Activated T-helper 1 cell treated with anti-CD3 and anti-CD28 coated beads, Interleukin-12 subunit alpha, Interleukin-12 subunit beta, Interleukin-2, Interleukin-4 antibody, amounts not matched to agents 30 ng/mL and 10 ng/mL and 1 ng/mL, durations not matched to agents 14 hours and 24 hours and 36 hours (primary cell): ENCODE measurements at regions of chr22 and their contacts with region 1.

Region 1: DNA sequence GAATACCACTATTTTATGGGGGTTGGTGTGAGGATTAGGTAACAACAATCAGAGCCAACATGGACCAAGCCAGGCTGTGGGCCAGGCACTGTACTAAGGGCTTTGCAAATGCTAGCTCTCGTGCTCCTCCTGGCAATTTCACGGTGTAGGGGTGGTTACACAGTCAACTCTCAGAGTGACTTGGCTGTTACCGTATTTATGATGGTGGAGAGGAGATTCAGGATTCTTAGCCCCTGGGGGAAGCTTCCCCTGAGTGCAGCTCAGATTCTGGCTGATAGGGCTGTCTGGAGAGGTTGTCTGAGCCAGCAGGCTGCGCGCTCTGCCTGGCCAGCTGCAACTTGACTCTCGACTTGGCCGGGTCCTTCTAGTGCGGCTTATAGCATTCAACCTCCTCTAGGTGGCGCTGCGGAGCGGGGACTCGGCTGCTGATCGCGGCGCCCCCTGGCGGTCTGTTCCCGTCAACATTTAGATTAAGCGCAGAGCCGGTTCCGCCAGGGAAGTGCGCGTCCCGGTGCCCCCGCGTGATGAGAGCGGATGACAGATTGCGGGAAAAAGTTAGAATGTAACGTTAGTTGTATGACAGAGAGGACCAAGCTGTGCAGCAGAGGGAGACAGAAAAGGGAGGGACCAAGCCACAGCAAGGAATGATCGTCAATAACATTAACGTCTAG is 4.5 kb upstream of the NCF4 start:
- DNase-seq: peak; percentile 90
- H3K4me3 Mint-ChIP-seq: peak overlapping the region; percentile 58
- H3K27ac Mint-ChIP-seq: peak overlapping the region; percentile 73
- H3K4me1 Mint-ChIP-seq: peaks cover 56% of the 10 kb centered on the region
- H3K27me3 Mint-ChIP-seq: peaks cover under 1% of the 10 kb centered on the region

Region 2: DNA sequence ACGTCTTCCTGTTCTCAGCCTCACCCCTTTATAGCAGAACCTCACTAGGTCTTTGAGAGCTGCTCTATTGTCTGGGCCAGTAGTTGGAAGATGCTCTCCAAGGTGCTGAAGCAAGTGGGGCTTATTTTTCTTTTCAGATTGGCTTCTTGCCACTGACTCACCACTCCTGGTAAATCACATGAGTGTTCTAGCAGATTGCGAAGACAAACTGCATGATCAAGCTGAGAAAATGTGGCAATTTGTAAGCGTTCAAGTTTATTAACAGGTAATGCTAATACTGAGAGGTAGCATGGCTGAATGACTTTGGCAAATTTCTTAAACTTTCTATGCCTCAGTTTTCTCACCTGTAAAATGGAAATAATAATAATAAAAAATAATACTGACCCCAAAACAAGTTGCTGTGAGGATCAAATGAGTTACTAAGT is 211.9 kb before region 1 on chr22:
- intact Hi-C with region 1: no loop called
- DNase-seq: no peak
- H3K4me3 Mint-ChIP-seq: no peak overlapping the region
- H3K27ac Mint-ChIP-seq: no peak overlapping the region
- H3K4me1 Mint-ChIP-seq: no peaks in the 10 kb centered on the region
- H3K27me3 Mint-ChIP-seq: peaks cover 12% of the 10 kb centered on the region

Region 3: GRCh38 chr22:36757668-36758211 is 98.5 kb before region 1 on chr22:
- intact Hi-C with region 1: loop called (anchors 1 kb)
- DNase-seq: peak; percentile 63
- H3K4me3 Mint-ChIP-seq: no peak overlapping the region
- H3K27ac Mint-ChIP-seq: no peak overlapping the region
- H3K4me1 Mint-ChIP-seq: no peaks in the 10 kb centered on the region
- H3K27me3 Mint-ChIP-seq: peaks cover 8% of the 10 kb centered on the region

Region 4: DNA sequence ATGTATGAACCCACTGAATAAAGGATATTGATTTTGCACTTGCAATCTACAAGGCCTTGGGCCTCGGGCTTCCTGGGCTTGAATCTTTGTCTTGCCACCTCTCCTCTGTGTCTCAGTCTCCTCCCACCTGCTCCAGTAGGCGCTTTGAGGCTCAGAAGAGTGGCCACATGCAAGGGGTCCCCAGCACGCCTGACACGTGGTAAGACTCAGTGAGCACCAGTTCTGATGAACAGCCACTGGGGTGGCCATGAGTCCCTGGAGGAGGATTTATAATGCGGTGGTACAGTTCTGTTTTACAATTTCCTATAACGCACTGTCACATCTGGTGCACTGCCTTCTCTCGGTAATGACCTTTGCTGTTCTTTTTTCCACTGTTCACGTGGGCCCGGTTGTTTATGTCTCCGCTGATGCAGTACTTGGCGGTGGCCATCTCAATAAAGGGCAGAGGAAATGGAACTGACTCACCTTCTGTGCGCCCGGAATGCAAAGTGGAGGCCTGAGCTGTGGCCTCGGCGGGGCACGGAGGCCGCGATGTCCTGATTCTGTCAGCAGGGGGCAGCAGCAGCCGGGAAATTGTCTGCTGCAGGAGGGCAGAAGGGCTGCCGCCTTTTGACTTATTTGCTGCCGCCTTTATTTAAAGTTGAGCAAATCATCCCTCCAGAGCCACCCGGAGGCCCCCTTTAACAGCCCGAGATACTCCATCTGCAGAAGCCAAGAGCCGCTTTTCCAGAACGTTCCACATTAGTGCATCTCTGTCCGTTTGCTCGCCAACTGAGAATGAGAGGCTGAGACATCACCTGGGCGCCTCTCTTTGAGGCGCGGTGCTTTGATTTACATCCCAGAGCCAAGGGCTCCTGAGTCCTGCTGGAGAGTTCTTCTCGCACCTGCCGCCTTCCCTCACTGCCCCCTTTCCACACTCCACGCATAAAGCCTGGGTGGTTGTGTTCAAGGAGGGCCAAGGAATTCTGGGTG is 74.3 kb before region 1 on chr22:
- intact Hi-C with region 1: loop called (anchors 1 kb)
- DNase-seq: peak; percentile 86
- H3K4me3 Mint-ChIP-seq: peak overlapping the region; percentile 52
- H3K27ac Mint-ChIP-seq: peak overlapping the region; percentile 95
- H3K4me1 Mint-ChIP-seq: peaks cover 38% of the 10 kb centered on the region
- H3K27me3 Mint-ChIP-seq: peaks cover 6% of the 10 kb centered on the region

Region 5: DNA sequence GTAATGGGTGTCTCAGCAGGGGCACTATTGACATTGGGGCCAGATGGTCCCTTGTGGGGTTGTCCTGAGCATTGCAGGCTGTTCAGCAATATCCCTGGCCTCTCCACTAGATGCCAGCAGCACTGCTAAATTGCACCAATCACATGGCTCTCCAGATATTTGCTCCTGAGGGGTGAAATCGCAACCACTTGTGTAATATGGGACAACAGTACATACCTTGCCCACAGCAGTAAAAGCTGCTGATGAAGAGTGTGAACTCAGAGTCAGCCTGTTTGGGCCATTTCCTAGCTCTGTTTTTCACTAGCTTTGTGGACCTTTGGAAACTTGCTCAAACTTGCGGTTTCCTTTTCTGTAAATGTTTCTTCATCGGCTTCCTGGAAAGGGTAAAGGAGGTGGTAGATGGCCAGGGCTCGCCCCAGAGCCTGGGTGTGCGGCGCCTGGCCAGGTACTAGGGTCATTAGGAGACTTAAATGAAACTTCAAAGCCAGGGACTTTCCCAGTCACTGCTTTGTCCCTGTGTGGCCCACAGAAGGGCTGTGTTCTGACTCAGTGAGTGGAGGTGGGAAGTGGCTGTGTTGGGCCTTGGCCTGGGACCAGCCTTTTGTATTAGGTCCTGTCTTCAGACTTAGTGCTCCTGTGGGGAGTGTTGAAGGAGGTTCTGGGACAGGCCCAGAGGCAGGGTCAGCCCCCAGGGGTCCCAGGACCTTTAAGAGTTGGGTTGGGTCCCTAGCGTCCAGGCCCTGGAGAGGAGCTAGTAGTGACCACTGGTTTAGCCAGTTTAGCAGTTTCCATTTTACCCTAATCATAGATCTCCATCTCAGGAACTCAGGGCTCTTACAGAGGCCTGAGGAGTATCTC is 17.7 kb after region 1 on chr22:
- intact Hi-C with region 1: loop called (anchors 1 kb)
- DNase-seq: peak; percentile 52
- H3K4me3 Mint-ChIP-seq: peak overlapping the region; percentile 30
- H3K27ac Mint-ChIP-seq: peak overlapping the region; percentile 86
- H3K4me1 Mint-ChIP-seq: peaks cover 28% of the 10 kb centered on the region
- H3K27me3 Mint-ChIP-seq: no peaks in the 10 kb centered on the region

Region 6: GRCh38 chr22:36977947-36978660 is 121.8 kb after region 1 on chr22:
- intact Hi-C with region 1: loop called (anchors 1 kb)
- DNase-seq: peak; percentile 84
- H3K4me3 Mint-ChIP-seq: peak overlapping the region; percentile 86
- H3K27ac Mint-ChIP-seq: peak overlapping the region; percentile 74
- H3K4me1 Mint-ChIP-seq: peaks cover 15% of the 10 kb centered on the region
- H3K27me3 Mint-ChIP-seq: peaks cover 8% of the 10 kb centered on the region